MCF 10A (cell line): ENCODE measurements at regions of chr9 and their contacts with region 1.

Region 1: GRCh38 chr9:129177791-129178559 is at the start of gene IER5L:
- DNase-seq: peak; percentile 95
- H3K4me3 Mint-ChIP-seq: peak within 1 kb of the TSS; percentile 89
- H3K27ac Mint-ChIP-seq: peak within 1 kb of the TSS; percentile 51
- H3K4me1 Mint-ChIP-seq: no peaks in the 10 kb centered on the region
- H3K27me3 Mint-ChIP-seq: no peaks in the 10 kb centered on the region
- CTCF ChIP-seq: no peak
- total RNA-seq, gene IER5L: 11.9 and 13.4 TPM in 2 replicates

Region 2: DNA sequence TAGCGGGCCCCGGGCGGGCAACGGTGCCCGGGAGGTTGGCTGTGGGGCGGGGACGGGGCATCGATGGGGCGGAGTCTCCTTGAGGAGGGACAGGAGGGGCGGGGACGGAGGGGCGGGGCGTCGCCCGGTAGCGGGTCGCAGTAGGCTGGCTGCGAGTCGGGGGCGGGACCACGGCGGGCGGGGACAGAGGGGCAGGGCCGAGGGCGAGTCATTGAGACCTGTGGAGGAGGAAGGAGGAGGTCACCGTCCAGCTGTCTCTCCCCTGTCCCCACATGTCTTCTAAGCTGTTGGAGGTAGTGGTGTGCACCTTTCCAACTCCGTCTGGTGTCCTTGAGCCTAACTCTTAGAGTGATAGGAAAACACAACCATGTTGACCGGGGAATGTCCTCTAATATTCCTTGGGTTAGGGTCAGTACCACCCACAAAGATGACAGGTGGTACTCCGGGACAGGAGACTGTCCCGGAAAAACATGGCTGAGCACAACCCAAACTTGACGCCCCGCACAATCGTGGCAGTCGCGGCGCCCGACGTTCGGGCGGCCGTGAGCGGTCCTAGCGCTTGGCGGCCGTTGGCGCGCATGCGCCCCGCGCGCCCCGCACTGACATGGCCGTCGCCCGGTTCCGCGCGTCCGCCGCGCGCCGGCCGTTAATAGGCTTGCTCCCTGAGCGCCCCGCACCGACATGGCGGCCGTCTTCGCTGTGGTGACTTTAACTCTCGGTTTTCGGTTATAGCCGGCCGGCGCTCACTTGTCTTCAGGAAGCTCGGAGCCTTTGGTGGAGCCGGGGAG is 67.0 kb before region 1 on chr9 and contains the starts of genes CRAT and PTPA:
- CTCF ChIA-PET with region 1: interaction called, 3 read pairs
- POLR2A ChIA-PET with region 1: no interaction called
- intact Hi-C with region 1: loop called (anchors 2 kb)
- DNase-seq: peak; percentile 92
- H3K4me3 Mint-ChIP-seq: peak within 1 kb of the TSS; percentile 89
- H3K27ac Mint-ChIP-seq: peak within 1 kb of the TSS; percentile 94
- H3K4me1 Mint-ChIP-seq: peaks cover 18% of the 10 kb centered on the region
- H3K27me3 Mint-ChIP-seq: no peaks in the 10 kb centered on the region
- CTCF ChIP-seq: no peak
- total RNA-seq, gene CRAT: 14.5 and 17.0 TPM in 2 replicates
- total RNA-seq, gene PTPA: 90.8 and 91.8 TPM in 2 replicates

Region 3: DNA sequence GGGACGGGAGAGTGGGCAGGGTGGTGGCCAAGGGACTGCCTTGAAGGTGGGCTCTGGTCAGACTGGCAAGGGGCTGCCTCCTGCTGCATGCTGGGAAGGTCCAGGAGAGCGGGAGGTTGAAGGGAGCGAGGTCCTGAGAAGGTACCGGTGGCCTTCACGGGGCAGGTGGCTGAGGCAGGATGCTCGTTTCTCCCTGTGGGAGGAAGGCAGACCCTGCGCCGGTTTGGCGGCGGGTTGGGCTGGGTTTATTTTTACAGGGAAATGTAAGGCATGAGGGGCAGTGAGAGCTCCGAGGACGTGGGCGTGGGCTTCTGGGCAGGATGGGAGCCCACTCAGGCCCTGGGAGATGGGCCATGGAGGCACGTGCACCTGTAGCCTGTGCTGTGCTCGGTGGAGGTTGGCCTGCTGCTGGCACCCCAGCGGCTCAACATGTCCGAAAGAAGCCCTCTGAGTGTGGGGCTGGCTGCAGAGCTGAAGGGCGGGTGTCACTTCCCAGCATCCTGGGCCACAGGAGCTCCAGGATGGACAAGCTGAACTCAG is 27.2 kb before region 1 on chr9:
- CTCF ChIA-PET with region 1: interaction called, 103 read pairs
- POLR2A ChIA-PET with region 1: interaction called, 3 read pairs
- intact Hi-C with region 1: no loop called
- DNase-seq: no peak
- H3K4me3 Mint-ChIP-seq: no peak overlapping the region
- H3K27ac Mint-ChIP-seq: no peak overlapping the region
- H3K4me1 Mint-ChIP-seq: no peaks in the 10 kb centered on the region
- H3K27me3 Mint-ChIP-seq: no peaks in the 10 kb centered on the region
- CTCF ChIP-seq: no peak

Region 4: GRCh38 chr9:129278391-129279237 is 100.6 kb after region 1 on chr9:
- CTCF ChIA-PET with region 1: interaction called, 3 read pairs
- POLR2A ChIA-PET with region 1: interaction called, 11 read pairs
- intact Hi-C with region 1: no loop called
- DNase-seq: peak; percentile 85
- H3K4me3 Mint-ChIP-seq: peak overlapping the region; percentile 50
- H3K27ac Mint-ChIP-seq: peak overlapping the region; percentile 76
- H3K4me1 Mint-ChIP-seq: peaks cover 35% of the 10 kb centered on the region
- H3K27me3 Mint-ChIP-seq: no peaks in the 10 kb centered on the region
- CTCF ChIP-seq: no peak

Region 5: GRCh38 chr9:129413537-129414376 is 235.8 kb after region 1 on chr9:
- CTCF ChIA-PET with region 1: no interaction called
- POLR2A ChIA-PET with region 1: interaction called, 3 read pairs
- intact Hi-C with region 1: loop called (anchors 5 kb)
- DNase-seq: peak; percentile 95
- H3K4me3 Mint-ChIP-seq: peak overlapping the region; percentile 73
- H3K27ac Mint-ChIP-seq: peak overlapping the region; percentile 95
- H3K4me1 Mint-ChIP-seq: no peaks in the 10 kb centered on the region
- H3K27me3 Mint-ChIP-seq: no peaks in the 10 kb centered on the region
- CTCF ChIP-seq: no peak

Region 6: GRCh38 chr9:129495534-129496325 is 317.8 kb after region 1 on chr9:
- CTCF ChIA-PET with region 1: interaction called, 35 read pairs
- POLR2A ChIA-PET with region 1: interaction called, 39 read pairs
- intact Hi-C with region 1: loop called (anchors 1 kb)
- DNase-seq: peak; percentile 91
- H3K4me3 Mint-ChIP-seq: peak overlapping the region; percentile 76
- H3K27ac Mint-ChIP-seq: peak overlapping the region; percentile 66
- H3K4me1 Mint-ChIP-seq: peaks cover 49% of the 10 kb centered on the region
- H3K27me3 Mint-ChIP-seq: no peaks in the 10 kb centered on the region
- CTCF ChIP-seq: no peak